ENCODE measurements at regions of chr5 and their contacts with region 1.

Region 1: DNA sequence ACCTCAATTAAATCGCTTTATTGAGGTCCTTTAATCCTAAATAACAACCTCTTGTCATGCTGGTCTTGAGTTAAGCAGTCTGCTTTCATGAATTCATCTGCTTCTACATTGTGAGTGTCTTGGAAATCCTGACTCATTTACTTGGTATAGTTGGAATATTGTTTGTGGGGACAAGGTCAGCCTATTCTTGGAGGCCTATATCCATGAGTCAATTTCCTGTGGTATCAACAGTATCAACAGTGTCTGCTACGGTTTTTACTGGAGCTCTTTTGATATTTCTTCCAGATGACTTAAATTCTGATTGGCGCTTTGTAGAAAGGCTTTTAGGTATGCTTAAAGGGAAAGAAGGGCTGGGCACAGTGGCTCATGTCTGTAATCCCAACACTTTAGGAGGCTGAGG is 71.2 kb upstream of the PARP8 start:
- DNase-seq: peak; percentile 20
- ATAC-seq: peak; percentile 66
- H3K4me3 Mint-ChIP-seq: no peak overlapping the region
- H3K27ac Mint-ChIP-seq: peak overlapping the region; percentile 69
- H3K4me1 Mint-ChIP-seq: peaks cover 47% of the 10 kb centered on the region
- H3K27me3 Mint-ChIP-seq: no peaks in the 10 kb centered on the region

Region 2: DNA sequence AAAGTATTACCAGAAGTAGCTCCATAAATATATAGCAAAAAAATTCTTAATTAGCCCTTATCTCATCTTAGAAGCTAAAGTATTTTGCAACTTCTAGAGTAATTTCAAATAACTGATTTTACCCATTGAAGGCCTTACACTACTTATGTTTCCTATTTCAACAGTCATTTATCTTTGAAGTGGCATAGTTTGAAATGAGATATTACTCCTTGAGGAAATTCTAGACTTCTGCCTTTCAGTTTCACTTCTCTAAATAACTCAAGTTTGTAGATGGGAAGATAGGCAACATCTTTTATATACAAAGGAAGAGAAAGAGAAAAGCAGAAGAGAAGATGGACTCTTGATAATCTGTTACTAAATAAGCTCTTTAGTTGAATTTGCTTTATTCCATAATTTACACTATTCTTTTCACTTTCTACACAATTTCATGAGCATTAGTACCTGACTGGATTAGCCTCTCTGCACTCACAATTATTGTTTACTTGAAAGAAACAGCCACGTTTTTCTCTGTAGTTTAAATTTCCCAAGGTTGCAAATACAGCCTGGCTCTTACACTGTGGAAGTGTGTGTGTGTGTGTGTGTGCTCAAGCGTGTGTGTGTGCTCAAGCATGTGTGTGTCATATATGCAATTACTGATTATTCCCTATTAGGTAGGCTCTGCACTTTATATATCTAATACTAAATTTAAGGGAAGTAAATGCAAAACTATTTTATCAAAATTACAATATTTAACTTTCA is 93.5 kb before region 1 on chr5:
- CTCF ChIA-PET with region 1: no interaction called
- POLR2A ChIA-PET with region 1: no interaction called
- intact Hi-C with region 1: loop called in 1 of 2 experiments (anchors 2 kb)
- DNase-seq: no peak
- ATAC-seq: peak; percentile 82
- H3K4me3 Mint-ChIP-seq: no peak overlapping the region
- H3K27ac Mint-ChIP-seq: no peak overlapping the region
- H3K4me1 Mint-ChIP-seq: peaks cover 10% of the 10 kb centered on the region
- H3K27me3 Mint-ChIP-seq: no peaks in the 10 kb centered on the region

Region 3: DNA sequence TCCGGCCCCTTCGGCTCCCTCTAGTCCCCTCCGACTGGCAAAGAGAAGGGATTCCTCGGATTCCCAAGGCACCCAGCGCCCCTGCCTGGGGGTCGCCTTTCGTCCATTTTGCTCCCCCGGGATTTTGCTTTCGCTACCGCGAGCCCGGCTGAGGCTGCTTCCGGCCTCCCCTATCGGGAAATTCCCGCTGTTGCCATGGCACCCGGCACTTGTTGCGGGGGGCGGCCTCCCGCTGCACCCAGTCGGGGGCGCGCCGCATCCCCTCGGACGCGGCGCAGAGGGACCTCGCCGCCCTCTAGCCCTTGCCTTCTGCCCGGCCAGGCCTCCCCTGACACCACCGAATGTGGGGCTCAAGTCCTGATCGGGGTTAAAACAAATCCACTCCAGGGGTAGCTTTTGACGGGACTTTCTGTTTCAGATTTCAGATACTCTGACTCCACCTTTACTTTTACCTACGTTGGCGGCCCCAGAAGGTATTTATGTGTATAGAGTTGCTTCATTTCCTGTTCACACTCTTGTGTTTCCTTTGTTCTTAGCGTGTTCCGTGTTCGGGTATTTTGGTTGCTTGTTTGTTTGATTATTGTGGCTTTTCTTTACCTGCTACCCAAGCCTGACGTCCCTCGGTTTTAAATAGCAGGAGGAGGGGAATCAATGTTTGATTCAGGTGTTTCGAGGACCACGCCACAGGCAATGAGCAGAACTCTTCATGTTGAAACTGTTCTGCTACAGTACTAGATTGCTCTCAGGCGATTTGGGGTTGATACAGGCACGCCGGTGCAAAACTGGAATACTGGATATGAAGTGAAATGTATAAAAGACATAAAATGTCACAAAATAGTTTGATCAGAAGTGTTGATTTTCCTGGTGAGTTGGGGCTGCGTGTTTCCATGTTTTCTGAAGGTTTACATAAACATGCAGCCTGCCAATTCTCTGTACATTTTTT is 72.7 kb after region 1 on chr5:
- CTCF ChIA-PET with region 1: no interaction called
- POLR2A ChIA-PET with region 1: no interaction called
- intact Hi-C with region 1: loop called (anchors 1 to 5 kb)
- DNase-seq: peak; percentile 92
- ATAC-seq: peak; percentile 70
- H3K4me3 Mint-ChIP-seq: peak overlapping the region; percentile 85
- H3K27ac Mint-ChIP-seq: peak overlapping the region; percentile 99
- H3K4me1 Mint-ChIP-seq: peaks cover 40% of the 10 kb centered on the region
- H3K27me3 Mint-ChIP-seq: no peaks in the 10 kb centered on the region

Region 4: DNA sequence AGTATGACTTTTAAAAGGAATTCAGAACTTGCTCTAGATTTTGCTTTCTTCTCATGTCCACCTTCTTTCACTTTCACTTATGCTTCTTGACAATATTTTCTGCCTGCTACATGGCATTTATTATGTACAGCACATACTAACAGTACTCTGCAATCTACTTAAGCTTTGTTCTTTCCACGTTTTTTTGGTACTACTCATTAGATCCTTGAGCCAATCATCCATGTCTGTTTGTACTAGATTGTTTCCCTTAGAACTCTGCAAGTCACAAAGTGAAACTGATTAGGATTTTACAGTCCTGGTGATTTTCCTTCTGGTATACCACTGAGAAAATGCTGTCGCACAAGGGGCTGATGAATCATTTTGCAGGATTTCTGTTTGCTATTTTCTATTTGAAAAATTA is 149.6 kb after region 1 on chr5:
- CTCF ChIA-PET with region 1: interaction called, 4 read pairs
- POLR2A ChIA-PET with region 1: no interaction called
- intact Hi-C with region 1: loop called (anchors 2 to 5 kb)
- DNase-seq: no peak
- ATAC-seq: peak; percentile 57
- H3K4me3 Mint-ChIP-seq: peak overlapping the region; percentile 73
- H3K27ac Mint-ChIP-seq: peak overlapping the region; percentile 91
- H3K4me1 Mint-ChIP-seq: peaks cover 64% of the 10 kb centered on the region
- H3K27me3 Mint-ChIP-seq: no peaks in the 10 kb centered on the region

Measured in activated CD4-positive, alpha-beta T cell treated with anti-CD3 and anti-CD28 coated beads for 36 hours (primary cell).